ENCODE measurements at regions of chr14 and their contacts with region 1.

Region 1: DNA sequence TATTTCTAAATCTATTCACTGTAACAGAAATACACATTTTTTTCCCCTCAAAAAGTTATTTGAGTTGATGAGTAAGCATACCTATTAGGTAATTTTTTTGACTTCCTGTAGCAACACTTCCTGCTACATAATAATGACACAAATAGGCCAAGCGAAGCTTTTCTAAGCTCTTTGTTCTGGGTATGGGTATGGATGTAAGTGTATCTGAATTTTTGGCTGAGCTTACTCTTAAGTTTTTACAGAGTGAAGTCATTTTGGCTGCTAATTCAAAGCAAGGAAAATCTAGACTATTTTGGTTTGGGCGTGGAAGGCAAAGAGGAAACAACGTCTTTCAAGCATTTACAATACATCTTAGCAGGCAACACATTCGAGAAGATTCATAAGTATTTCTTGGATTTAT is 1206.0 kb upstream of the FLRT2 start:
- DNase-seq: no peak
- H3K4me3 ChIP-seq: no peak overlapping the region
- H3K27ac ChIP-seq: no peak overlapping the region
- H3K4me1 ChIP-seq: no peaks in the 10 kb centered on the region
- H3K27me3 ChIP-seq: no peaks in the 10 kb centered on the region
- CTCF ChIP-seq: no peak

Region 2: GRCh38 chr14:84225268-84225667 is 98.7 kb before region 1 on chr14:
- CTCF ChIA-PET with region 1: no interaction called
- POLR2A ChIA-PET with region 1: no interaction called
- intact Hi-C with region 1: no loop called
- DNase-seq: no peak
- H3K4me3 ChIP-seq: no peak overlapping the region
- H3K27ac ChIP-seq: no peak overlapping the region
- H3K4me1 ChIP-seq: no peaks in the 10 kb centered on the region
- H3K27me3 ChIP-seq: no peaks in the 10 kb centered on the region
- CTCF ChIP-seq: no peak

Region 3: DNA sequence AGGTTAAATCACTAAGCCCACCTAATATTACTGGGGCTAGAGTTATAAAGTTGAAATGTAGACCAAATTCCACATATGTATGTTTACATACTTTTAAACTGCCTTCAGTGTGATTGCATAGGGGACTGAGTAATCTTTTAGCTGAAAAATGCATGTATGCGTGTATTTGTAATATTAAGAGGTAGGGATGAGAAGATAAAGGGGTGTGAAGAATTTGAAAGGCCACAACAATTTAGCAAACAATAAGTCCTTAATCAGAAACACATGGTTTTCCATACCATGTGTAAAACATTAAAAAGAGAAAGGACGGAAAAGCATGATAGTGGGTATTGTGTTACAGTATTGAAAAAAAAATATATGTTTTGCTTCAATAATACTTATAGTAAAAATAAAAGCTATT is 286.1 kb after region 1 on chr14:
- CTCF ChIA-PET with region 1: interaction called, 14 read pairs
- POLR2A ChIA-PET with region 1: no interaction called
- intact Hi-C with region 1: no loop called
- DNase-seq: no peak
- H3K4me3 ChIP-seq: no peak overlapping the region
- H3K27ac ChIP-seq: no peak overlapping the region
- H3K4me1 ChIP-seq: no peaks in the 10 kb centered on the region
- H3K27me3 ChIP-seq: no peaks in the 10 kb centered on the region
- CTCF ChIP-seq: no peak

Region 4: GRCh38 chr14:84785996-84786395 is 462.0 kb after region 1 on chr14:
- CTCF ChIA-PET with region 1: no interaction called
- POLR2A ChIA-PET with region 1: no interaction called
- intact Hi-C with region 1: loop called (anchors 5 kb)
- DNase-seq: no peak
- H3K4me3 ChIP-seq: no peak overlapping the region
- H3K27ac ChIP-seq: no peak overlapping the region
- H3K4me1 ChIP-seq: no peaks in the 10 kb centered on the region
- H3K27me3 ChIP-seq: no peaks in the 10 kb centered on the region
- CTCF ChIP-seq: no peak

Measured in PC-9 (cell line).